Activated B cell treated with CpG ODN at 0.5 μM for 24 hours (primary cell): ENCODE measurements at regions of chr14 and their contacts with region 1.

Region 1: DNA sequence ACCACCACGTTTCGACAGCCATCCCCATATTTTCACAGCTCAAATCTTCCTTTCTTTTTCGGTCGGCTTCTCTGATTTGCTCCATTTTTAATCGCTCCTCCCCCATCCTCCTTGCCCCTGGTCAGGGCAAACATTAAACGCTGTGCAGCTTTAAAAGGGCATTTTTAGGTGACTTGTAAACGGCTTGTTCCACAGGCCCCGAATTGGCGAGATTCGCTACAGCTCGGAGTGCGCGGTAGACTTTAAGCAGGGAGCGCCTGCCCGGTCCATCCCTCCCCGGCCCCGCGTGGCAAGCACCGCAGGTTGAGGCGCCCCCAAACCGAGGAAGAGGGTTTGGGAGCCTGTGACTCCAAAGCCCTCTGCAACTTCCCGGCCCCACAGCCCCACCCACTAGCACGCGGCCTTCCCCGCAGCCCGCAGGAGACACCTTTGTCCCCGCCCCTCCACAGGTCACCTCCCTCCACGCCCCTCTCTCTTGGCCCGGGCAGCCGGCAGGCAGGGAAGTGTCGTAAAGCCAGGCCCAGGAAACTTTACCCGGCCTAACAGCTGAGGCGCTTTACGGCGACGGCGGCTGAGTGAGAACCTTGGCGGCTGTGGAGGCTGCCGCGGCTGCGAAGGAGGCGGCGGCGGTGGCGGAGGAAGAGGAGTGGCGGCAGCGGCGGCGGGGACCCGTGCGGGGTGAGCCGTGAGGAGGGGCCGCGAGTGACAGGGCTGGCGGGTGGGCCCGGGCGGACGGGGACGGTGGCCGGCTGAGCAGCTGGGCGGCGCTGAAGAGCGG is at the start of gene NAA30:
- DNase-seq: peak; percentile 89
- ATAC-seq: peak; percentile 96
- H3K4me3 Mint-ChIP-seq: peak within 1 kb of the TSS; percentile 88
- H3K27ac Mint-ChIP-seq: peak within 1 kb of the TSS; percentile 89
- H3K4me1 Mint-ChIP-seq: peaks cover 40% of the 10 kb centered on the region
- H3K27me3 Mint-ChIP-seq: peaks cover 1% of the 10 kb centered on the region
- CTCF ChIP-seq: no peak
- total RNA-seq, gene NAA30: 12.8 and 14.6 TPM in 2 replicates

Region 2: DNA sequence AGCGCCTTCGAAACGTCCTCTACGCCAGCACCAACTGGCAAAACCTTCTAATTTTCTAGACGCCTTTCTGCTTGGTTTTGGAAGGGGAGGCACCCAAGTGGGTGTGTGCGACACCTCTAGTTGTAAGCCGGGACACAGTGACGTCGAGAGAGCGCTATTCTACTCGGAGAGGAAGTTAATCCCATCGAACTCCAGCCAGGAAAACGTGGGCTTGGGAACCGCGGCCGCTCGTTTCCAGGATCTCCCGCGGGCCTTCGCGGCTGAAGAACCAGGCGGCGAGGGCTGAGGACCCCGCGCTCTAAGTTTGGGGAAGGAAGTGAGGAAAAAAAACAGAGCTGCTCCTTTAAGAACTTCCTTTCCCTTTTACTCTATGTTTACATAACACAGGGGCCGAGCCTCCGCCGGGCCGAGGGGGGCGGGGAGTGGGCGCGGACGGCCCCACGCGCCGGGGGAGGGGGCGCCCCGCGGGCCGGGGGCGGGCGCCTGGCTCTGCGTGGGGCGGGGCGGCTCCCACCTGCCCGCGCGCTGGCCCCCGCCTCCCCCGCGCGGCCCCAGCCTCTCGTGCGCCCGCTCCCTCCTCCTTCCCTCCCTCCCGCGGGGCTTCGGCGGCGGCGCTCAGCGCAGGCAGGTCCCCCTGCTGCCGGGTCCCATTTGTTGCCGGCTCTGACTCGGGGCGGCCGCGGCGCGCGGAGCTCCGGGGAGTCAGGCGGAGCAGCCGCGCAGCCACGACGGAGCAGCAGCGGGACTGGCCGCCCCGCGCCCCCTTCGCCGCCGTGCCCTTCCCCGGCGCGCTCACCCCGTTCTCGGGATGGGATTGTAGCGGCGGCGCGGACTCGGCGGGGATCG is 1272.2 kb before region 1 on chr14 and contains the start of gene PELI2:
- CTCF ChIA-PET with region 1: no interaction called
- POLR2A ChIA-PET with region 1: no interaction called
- intact Hi-C with region 1: loop called (anchors 5 kb)
- DNase-seq: peak; percentile 83
- ATAC-seq: peak; percentile 83
- H3K4me3 Mint-ChIP-seq: peak within 1 kb of the TSS; percentile 95
- H3K27ac Mint-ChIP-seq: peak within 1 kb of the TSS; percentile 93
- H3K4me1 Mint-ChIP-seq: peaks cover 54% of the 10 kb centered on the region
- H3K27me3 Mint-ChIP-seq: peaks cover 2% of the 10 kb centered on the region
- CTCF ChIP-seq: no peak
- total RNA-seq, gene PELI2: 5.5 and 6.1 TPM in 2 replicates

Region 3: GRCh38 chr14:56579345-56580220 is 810.6 kb before region 1 on chr14 and contains the start of gene TMEM260:
- CTCF ChIA-PET with region 1: no interaction called
- POLR2A ChIA-PET with region 1: interaction called, 8 read pairs
- intact Hi-C with region 1: loop called (anchors 1 kb)
- DNase-seq: peak; percentile 87
- ATAC-seq: peak; percentile 94
- H3K4me3 Mint-ChIP-seq: peak within 1 kb of the TSS; percentile 90
- H3K27ac Mint-ChIP-seq: peak within 1 kb of the TSS; percentile 96
- H3K4me1 Mint-ChIP-seq: peaks cover 35% of the 10 kb centered on the region
- H3K27me3 Mint-ChIP-seq: no peaks in the 10 kb centered on the region
- CTCF ChIP-seq: peak; percentile 78
- total RNA-seq, gene TMEM260: 22.0 and 24.7 TPM in 2 replicates

Region 4: GRCh38 chr14:57199921-57200320 is 190.3 kb before region 1 on chr14:
- CTCF ChIA-PET with region 1: no interaction called
- POLR2A ChIA-PET with region 1: no interaction called
- intact Hi-C with region 1: loop called (anchors 10 kb)
- DNase-seq: no peak
- ATAC-seq: no peak
- H3K4me3 Mint-ChIP-seq: no peak overlapping the region
- H3K27ac Mint-ChIP-seq: no peak overlapping the region
- H3K4me1 Mint-ChIP-seq: no peaks in the 10 kb centered on the region
- H3K27me3 Mint-ChIP-seq: peaks cover 3% of the 10 kb centered on the region
- CTCF ChIP-seq: no peak

Region 5: DNA sequence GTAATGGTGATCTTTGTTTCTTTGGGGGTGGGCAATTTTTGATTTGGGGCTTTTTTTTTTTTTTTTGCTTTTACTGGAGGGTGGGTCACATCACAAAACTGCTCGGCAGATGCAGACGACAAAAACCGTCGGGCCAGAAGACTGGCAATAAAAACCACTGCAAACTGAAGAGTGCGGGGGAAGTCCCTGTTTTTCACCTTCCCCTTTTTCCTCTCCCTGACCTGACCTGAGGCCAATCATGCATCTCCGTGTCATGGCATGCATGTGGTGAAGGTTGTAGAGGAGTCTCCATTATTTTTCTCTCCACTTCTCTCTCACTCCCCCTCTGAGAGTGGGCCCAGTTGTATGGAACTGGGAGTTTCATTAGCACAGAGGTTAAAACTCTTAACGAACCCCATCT is 64.0 kb before region 1 on chr14:
- CTCF ChIA-PET with region 1: no interaction called
- POLR2A ChIA-PET with region 1: interaction called, 3 read pairs
- intact Hi-C with region 1: loop called (anchors 1 kb)
- DNase-seq: no peak
- ATAC-seq: peak; percentile 99
- H3K4me3 Mint-ChIP-seq: peak overlapping the region; percentile 15
- H3K27ac Mint-ChIP-seq: peak overlapping the region; percentile 50
- H3K4me1 Mint-ChIP-seq: peaks cover 13% of the 10 kb centered on the region
- H3K27me3 Mint-ChIP-seq: peaks cover 5% of the 10 kb centered on the region
- CTCF ChIP-seq: no peak

Region 6: GRCh38 chr14:58637391-58638230 is 1247.4 kb after region 1 on chr14 and contains the start of gene DACT1:
- CTCF ChIA-PET with region 1: no interaction called
- POLR2A ChIA-PET with region 1: no interaction called
- intact Hi-C with region 1: loop called (anchors 5 kb)
- DNase-seq: peak; percentile 52
- ATAC-seq: peak; percentile 80
- H3K4me3 Mint-ChIP-seq: peak within 1 kb of the TSS; percentile 94
- H3K27ac Mint-ChIP-seq: peak within 1 kb of the TSS; percentile 90
- H3K4me1 Mint-ChIP-seq: peaks cover 46% of the 10 kb centered on the region
- H3K27me3 Mint-ChIP-seq: peaks cover 17% of the 10 kb centered on the region
- CTCF ChIP-seq: no peak
- total RNA-seq, gene DACT1: 3.0 and 3.5 TPM in 2 replicates